GM18951 (cell line): ENCODE measurements at regions of chr4 and their contacts with region 1.

Region 1: DNA sequence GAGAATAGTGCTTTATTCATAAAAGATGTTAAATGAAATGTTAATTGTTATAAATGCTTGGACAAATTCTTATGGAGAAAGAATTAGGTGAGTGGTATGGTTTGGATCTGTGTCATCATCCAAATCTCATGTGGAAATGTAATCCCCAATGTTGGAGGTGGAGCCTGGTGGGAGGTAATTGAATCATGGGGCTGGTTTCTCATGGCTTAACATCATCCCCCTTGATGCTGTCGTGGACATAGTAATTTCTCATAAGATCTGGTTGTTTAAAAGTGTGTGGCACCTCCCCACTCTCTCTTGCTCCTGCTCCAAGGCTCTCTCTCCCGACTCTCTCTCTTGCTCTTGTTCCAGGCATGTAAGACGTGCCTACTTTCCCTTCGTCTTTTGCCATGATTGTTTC is 22.5 kb downstream of the GYPE start:
- POLR2A ChIP-seq: no peak

Region 2: DNA sequence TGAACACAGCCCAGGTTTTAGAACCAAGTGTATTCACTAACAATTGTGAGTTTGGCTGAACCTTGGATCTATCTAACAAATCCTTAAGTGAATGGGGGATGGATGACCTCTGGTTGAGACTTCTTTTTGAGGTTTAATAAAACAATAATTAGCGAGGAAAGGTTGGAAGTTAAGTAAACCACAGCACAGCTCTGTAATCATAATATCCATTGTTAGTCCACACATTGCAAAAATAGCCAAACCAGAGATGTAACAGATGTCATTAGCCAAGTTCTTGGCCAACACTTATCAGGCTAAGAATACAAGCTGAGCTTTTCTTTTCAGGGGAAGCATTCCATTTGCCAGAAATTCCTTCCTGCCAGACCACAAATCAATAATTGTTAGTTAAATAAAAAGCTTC is 241.5 kb before region 1 on chr4:
- in situ Hi-C with region 1: no loop called
- POLR2A ChIP-seq: no peak

Region 3: GRCh38 chr4:143819029-143819428 is 63.9 kb before region 1 on chr4:
- in situ Hi-C with region 1: no loop called
- POLR2A ChIP-seq: no peak

Region 4: GRCh38 chr4:143986180-143986579 is 103.3 kb after region 1 on chr4:
- in situ Hi-C with region 1: loop called (anchors 10 kb)
- POLR2A ChIP-seq: no peak